ENCODE measurements at regions of chr2 and their contacts with region 1.

Region 1: GRCh38 chr2:171433763-171434670 is at the starts of genes DCAF17 and METTL8:
- DNase-seq: peak; percentile 84 to 97 (median 93)
- ATAC-seq: peak; percentile 91
- H3K4me3 ChIP-seq: peak within 1 kb of the TSS; percentile 79 to 93
- H3K4me3 Mint-ChIP-seq: peak within 1 kb of the TSS; percentile 91
- H3K27ac ChIP-seq: peak within 1 kb of the TSS; percentile 80 to 97
- H3K27ac Mint-ChIP-seq: peak within 1 kb of the TSS; percentile 96
- H3K4me1 ChIP-seq: peaks cover 12% of the 10 kb centered on the region
- H3K4me1 Mint-ChIP-seq: peaks cover 47% of the 10 kb centered on the region
- H3K27me3 ChIP-seq: no peaks in the 10 kb centered on the region
- H3K27me3 Mint-ChIP-seq: no peaks in the 10 kb centered on the region
- CTCF ChIP-seq: peak; percentile 12
- total RNA-seq, gene DCAF17: 12.5 to 12.9 TPM
- total RNA-seq, gene METTL8: 6.2 to 7.7 TPM

Region 2: DNA sequence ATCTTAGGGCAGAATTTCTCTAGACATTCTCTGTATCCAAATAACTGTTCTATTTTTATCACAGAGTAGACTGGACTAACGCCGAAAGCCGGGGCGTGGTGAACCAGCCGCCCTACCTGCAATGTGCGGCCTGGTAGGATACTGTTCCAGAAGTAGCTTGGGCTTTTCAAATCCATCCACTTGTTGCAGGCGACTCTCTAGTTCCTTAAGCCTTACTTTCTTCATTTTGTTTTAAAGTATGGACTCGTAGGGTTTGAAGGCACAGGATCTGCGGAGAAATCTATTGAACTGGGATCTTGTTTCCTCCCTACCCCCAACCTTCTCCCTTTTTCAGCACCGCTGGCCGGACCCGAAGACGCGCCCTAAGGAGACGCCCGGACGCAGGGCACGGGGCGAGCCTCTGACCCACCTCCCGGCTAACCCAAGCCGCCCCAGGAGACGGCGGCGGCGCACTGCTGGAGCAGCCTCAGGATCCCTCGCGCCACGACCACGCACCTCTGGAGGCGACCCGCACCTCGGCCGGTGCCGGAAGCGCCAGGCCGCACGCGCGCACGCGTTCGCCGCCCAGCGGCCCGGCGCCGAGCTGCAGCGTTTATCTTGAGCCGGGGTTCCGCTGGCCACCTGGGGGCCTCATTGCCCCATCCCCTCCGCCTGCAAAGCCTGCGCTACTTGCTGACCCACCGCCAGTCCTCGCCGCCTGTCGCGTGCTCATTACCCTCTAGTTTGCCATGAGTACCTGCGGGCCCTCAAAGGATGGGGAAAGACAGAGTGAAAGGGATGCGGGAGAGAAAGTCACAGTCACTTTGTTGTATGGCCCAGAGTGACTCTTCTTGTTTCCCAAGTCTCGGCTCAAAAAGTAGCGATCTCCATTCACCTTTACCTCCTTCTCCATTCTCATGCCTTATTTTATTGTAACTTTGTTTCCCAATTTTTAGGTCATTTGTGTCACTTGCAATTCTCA is 1609.4 kb before region 1 on chr2 and contains the start of gene METTL5:
- CTCF ChIA-PET with region 1: no interaction called
- POLR2A ChIA-PET with region 1: no interaction called
- intact Hi-C with region 1: loop called in 1 of 2 experiments (anchors 10 kb)
- DNase-seq: peak; percentile 55 to 87 (median 73)
- ATAC-seq: peak; percentile 61
- H3K4me3 ChIP-seq: peak within 1 kb of the TSS; percentile 87
- H3K4me3 Mint-ChIP-seq: peak within 1 kb of the TSS; percentile 95
- H3K27ac ChIP-seq: peak within 1 kb of the TSS; percentile 59 to 72
- H3K27ac Mint-ChIP-seq: peak within 1 kb of the TSS; percentile 92
- H3K4me1 ChIP-seq: peaks cover 37% of the 10 kb centered on the region
- H3K4me1 Mint-ChIP-seq: peaks cover 61% of the 10 kb centered on the region
- H3K27me3 ChIP-seq: no peaks in the 10 kb centered on the region
- H3K27me3 Mint-ChIP-seq: no peaks in the 10 kb centered on the region
- CTCF ChIP-seq: peak; percentile 93
- total RNA-seq, gene METTL5: 13.7 to 15.8 TPM

Region 3: DNA sequence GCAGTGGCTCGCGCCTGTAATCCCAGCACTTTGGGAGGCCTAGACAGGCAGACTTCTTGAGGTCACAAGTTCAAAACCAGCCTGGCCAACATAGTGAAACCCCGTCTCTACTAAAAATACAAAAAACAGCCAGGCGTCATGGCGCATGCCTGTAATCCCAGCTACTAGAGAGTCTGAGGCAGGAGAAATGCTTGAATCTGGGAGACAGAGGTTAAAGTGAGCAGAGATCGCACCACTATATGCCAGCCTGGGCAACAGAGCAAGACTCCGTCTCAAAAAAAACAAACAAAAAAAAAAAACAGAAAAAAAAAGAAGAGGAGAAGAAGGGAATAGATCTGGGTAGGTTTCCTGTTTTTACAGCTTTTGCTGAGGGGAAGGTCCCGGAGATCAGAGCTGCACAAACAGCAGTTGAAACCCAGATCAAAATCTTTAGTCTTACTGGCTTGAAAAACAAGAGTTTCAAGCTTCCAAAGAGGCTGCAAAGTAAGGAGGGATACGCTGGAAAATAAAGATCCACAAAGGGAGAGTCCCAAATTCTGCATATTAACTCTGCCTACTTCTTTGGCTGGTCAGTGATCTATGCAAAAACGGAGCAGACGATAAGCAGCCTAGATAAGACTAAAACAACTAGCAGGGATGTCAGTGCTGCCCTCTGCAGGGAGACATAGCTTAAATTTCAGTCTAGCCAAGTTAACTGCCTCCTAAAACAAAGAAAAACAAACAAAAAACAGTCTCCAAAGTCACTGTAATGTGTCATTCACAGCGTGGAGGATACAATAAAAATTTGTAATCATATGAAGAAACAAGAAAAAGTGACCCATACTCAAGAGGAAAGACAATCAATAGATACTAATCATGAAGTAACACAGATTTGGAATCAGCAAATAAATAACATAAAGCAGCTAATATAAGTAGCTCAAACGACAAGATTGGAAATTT is 347.4 kb before region 1 on chr2:
- CTCF ChIA-PET with region 1: interaction called, 3 read pairs
- POLR2A ChIA-PET with region 1: no interaction called
- intact Hi-C with region 1: loop called in 1 of 2 experiments (anchors 5 kb)
- DNase-seq: peak; percentile 27 to 78 (median 57)
- ATAC-seq: peak; percentile 72
- H3K4me3 ChIP-seq: peak overlapping the region; percentile 4 to 39
- H3K4me3 Mint-ChIP-seq: peak overlapping the region; percentile 80
- H3K27ac ChIP-seq: peak overlapping the region; percentile 7 to 39
- H3K27ac Mint-ChIP-seq: peak overlapping the region; percentile 95
- H3K4me1 ChIP-seq: peaks cover 57% of the 10 kb centered on the region
- H3K4me1 Mint-ChIP-seq: peaks cover 66% of the 10 kb centered on the region
- H3K27me3 ChIP-seq: no peaks in the 10 kb centered on the region
- H3K27me3 Mint-ChIP-seq: no peaks in the 10 kb centered on the region
- CTCF ChIP-seq: peak; percentile 80

Region 4: GRCh38 chr2:171416009-171416926 is 17.7 kb before region 1 on chr2:
- CTCF ChIA-PET with region 1: interaction called, 6 read pairs
- POLR2A ChIA-PET with region 1: interaction called, 3 read pairs
- intact Hi-C with region 1: loop called in 1 of 2 experiments (anchors 2 kb)
- DNase-seq: peak; percentile 44 to 85 (median 79)
- ATAC-seq: peak; percentile 98
- H3K4me3 ChIP-seq: no peak overlapping the region
- H3K4me3 Mint-ChIP-seq: no peak overlapping the region
- H3K27ac ChIP-seq: no peak overlapping the region
- H3K27ac Mint-ChIP-seq: peak overlapping the region; percentile 1
- H3K4me1 ChIP-seq: no peaks in the 10 kb centered on the region
- H3K4me1 Mint-ChIP-seq: peaks cover 10% of the 10 kb centered on the region
- H3K27me3 ChIP-seq: no peaks in the 10 kb centered on the region
- H3K27me3 Mint-ChIP-seq: no peaks in the 10 kb centered on the region
- CTCF ChIP-seq: peak; percentile 65

Region 5: DNA sequence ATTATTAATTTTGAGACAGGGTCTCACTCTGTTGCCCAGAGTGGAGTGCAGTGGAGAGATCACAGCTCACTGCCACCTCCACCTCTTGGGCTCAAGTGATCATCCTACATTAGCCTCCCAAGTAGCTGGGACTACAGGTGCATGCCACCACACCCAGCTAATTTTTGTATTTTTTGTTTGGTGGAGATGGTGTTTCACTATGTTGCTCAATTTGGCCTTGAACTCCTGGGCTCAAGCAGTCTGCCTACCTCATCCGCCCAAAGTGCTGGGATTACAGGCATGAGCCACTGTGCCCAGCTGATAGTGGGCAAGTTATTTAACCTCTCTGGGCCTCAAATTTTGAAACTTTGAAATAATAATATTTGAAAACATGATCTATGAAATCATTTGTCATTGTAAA is 26.5 kb after region 1 on chr2:
- CTCF ChIA-PET with region 1: no interaction called
- POLR2A ChIA-PET with region 1: no interaction called
- intact Hi-C with region 1: no loop called
- DNase-seq: no peak
- ATAC-seq: no peak
- H3K4me3 ChIP-seq: no peak overlapping the region
- H3K4me3 Mint-ChIP-seq: no peak overlapping the region
- H3K27ac ChIP-seq: no peak overlapping the region
- H3K27ac Mint-ChIP-seq: no peak overlapping the region
- H3K4me1 ChIP-seq: no peaks in the 10 kb centered on the region
- H3K4me1 Mint-ChIP-seq: peaks cover 5% of the 10 kb centered on the region
- H3K27me3 ChIP-seq: no peaks in the 10 kb centered on the region
- H3K27me3 Mint-ChIP-seq: no peaks in the 10 kb centered on the region
- CTCF ChIP-seq: no peak

Region 6: GRCh38 chr2:171922230-171923022 is 488.4 kb after region 1 on chr2 and contains the start of gene HAT1:
- CTCF ChIA-PET with region 1: no interaction called
- POLR2A ChIA-PET with region 1: no interaction called
- intact Hi-C with region 1: loop called (anchors 2 to 10 kb)
- DNase-seq: peak; percentile 94 to 99 (median 97)
- ATAC-seq: peak; percentile 98
- H3K4me3 ChIP-seq: peak within 1 kb of the TSS; percentile 82 to 97
- H3K4me3 Mint-ChIP-seq: peak within 1 kb of the TSS; percentile 98
- H3K27ac ChIP-seq: peak within 1 kb of the TSS; percentile 94 to 96
- H3K27ac Mint-ChIP-seq: peak within 1 kb of the TSS; percentile 97
- H3K4me1 ChIP-seq: peaks cover 21% of the 10 kb centered on the region
- H3K4me1 Mint-ChIP-seq: peaks cover 45% of the 10 kb centered on the region
- H3K27me3 ChIP-seq: no peaks in the 10 kb centered on the region
- H3K27me3 Mint-ChIP-seq: no peaks in the 10 kb centered on the region
- CTCF ChIP-seq: no peak
- total RNA-seq, gene HAT1: 29.5 to 30.2 TPM

Measured in CD8-positive, alpha-beta T cell (primary cell).